Ascending aorta (tissue), 2 donors: ENCODE measurements at regions of chr3 and their contacts with region 1.

Region 1: GRCh38 chr3:19543212-19543841 is 390.7 kb downstream of the EFHB start:
- DNase-seq: no peak
- H3K4me3 ChIP-seq: no peak overlapping the region
- H3K27ac ChIP-seq: no peak overlapping the region
- H3K4me1 ChIP-seq: no peaks in the 10 kb centered on the region
- H3K27me3 ChIP-seq: no peaks in the 10 kb centered on the region
- CTCF ChIP-seq: peak; percentile 15 to 64 (median 42)

Region 2: DNA sequence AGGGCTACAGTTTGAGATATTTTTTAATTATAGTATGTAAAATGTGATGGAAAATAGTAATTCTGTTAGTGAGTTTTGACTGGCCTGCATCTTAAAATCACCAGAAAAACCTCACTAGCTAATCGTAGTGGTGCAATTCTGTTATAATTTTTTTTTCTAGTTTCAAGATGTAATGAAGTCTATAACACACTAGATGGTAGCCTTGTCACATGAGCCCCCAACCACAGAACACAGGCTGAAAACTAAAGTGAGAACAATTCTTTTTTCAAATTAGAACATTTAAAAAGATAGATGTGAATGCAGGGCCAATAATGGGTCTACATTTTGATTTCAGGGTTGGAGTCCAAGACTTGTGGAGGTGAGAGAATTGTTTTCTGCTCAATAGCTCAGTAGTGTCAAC is 478.3 kb before region 1 on chr3:
- intact Hi-C with region 1: loop called (anchors 10 kb)
- DNase-seq: no peak
- H3K4me3 ChIP-seq: no peak overlapping the region
- H3K27ac ChIP-seq: no peak overlapping the region
- H3K4me1 ChIP-seq: peaks cover 0 to 2% of the 10 kb centered on the region in 2 donors
- H3K27me3 ChIP-seq: no peaks in the 10 kb centered on the region
- CTCF ChIP-seq: peak in 2 of 3 experiments; percentile 29 to 41

Region 3: DNA sequence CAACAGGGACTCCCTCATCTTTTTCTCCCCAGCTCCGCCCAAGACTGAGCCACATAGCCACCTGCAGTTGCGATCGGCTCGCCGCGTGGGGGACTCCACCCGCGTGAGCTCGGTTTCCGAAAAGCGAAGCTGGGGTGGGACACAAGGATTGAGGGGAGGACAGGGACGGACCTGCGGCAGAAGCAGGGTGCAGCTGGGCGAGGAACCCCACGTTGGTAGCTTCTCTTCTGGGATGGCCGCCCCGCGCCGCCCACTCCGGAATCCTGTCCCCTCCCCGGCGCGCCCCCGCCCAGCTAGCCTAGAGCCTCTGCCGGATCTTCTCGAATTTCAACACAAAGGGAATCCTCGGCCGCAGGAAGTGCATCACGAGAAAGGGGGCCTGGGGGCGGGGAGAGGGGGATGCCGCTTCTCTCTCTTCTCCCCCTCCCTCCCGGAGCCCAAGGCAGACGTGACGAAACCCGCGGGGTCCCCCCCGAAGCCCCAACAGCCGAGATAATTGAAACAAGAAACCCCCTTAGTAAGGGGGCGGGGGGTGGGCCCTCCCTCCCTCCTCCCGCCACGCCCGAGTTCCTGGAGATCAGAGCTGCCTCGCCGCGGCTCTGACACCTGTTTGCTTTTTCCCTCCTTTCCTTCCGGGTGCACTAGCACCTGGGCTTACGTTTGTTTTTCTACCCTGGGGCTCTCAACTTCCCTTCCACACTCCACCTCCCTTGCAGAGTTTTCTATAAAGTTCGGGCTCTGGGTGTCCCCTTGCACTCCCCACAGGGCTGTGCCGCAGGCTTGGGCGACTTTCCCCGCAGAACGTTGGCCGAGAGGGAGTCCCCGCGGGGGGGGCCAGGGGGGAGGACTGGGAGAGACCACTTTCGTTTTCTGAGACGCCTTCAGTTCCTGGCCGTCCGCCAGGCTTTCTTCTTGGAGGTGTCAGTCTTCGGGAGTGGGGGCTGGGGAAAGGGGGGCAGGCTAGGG is 396.4 kb before region 1 on chr3:
- intact Hi-C with region 1: loop called (anchors 10 kb)
- DNase-seq: peak in 1 of 2 donors; percentile 70
- H3K4me3 ChIP-seq: peak overlapping the region; percentile 78 to 89
- H3K27ac ChIP-seq: no peak overlapping the region
- H3K4me1 ChIP-seq: peaks cover 5 to 8% of the 10 kb centered on the region in 2 donors
- H3K27me3 ChIP-seq: no peaks in the 10 kb centered on the region
- CTCF ChIP-seq: peak; percentile 8 to 48 (median 27)

Region 4: DNA sequence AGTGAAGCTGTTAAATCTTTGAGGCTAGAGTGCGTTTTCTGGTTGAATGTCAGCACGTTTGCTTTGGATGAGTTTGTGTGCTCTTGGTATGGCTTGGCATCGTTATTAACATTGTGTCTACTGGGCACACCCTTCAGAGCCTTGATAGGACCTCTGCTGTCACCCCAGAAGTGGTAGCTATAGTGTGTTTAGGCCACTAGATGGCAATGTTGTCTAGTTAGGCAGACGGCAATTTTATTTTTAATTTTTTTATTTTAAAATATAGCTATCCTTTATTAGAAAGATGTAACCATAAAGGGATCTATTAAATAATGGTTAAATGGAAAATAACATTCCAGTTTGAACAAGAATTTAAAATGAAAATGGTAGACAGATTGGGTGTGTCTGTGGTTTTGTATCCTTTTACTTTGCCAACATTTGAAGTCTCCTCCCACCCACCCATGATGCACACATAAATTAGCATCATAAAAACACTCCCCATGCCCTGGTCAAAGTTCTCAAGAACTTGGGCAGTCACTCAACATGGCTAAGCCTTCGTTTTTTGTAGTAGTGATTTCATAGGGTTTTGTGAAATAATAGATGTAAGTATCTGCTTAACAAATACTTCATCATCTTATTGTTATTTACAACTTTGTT is 194.3 kb before region 1 on chr3:
- intact Hi-C with region 1: loop called (anchors 1 kb)
- DNase-seq: no peak
- H3K4me3 ChIP-seq: no peak overlapping the region
- H3K27ac ChIP-seq: no peak overlapping the region
- H3K4me1 ChIP-seq: no peaks in the 10 kb centered on the region
- H3K27me3 ChIP-seq: no peaks in the 10 kb centered on the region
- CTCF ChIP-seq: peak; percentile 43 to 82 (median 75)

Region 5: GRCh38 chr3:19652336-19652735 is 109.0 kb after region 1 on chr3:
- intact Hi-C with region 1: no loop called
- DNase-seq: no peak
- H3K4me3 ChIP-seq: no peak overlapping the region
- H3K27ac ChIP-seq: no peak overlapping the region
- H3K4me1 ChIP-seq: no peaks in the 10 kb centered on the region
- H3K27me3 ChIP-seq: no peaks in the 10 kb centered on the region
- CTCF ChIP-seq: no peak

Region 6: DNA sequence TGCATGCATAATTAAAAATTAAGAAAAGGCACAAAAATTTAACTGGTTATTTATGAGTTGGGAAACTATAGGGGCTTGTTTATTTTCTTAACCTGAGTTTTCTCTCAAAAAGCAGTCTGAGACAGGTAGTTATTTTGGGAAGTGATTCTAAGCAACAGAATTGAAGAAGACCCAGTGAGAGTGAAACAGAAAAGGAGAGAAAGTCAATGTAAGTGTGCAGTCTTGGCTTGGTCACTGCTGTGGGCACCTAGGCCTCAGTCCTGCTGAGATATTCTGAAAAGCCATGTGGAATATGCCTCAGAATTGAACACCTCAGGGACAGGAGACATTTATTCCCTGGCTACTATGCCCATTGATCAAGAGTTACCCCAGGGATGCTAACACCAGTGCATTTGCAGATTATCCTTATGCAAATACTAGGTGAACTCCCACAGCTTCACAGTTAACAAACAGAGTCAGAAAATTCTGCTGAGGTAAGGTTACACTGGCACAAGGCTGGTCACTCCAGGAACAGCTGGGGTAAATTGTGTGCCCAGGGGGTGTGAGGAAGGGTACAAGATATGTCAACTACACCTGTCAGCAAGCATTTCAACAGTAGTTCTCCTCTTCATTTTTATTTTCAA is 167.9 kb after region 1 on chr3:
- intact Hi-C with region 1: no loop called
- DNase-seq: no peak
- H3K4me3 ChIP-seq: no peak overlapping the region
- H3K27ac ChIP-seq: no peak overlapping the region
- H3K4me1 ChIP-seq: no peaks in the 10 kb centered on the region
- H3K27me3 ChIP-seq: no peaks in the 10 kb centered on the region
- CTCF ChIP-seq: no peak